ENCODE measurements at regions of chr10 and their contacts with region 1.

Region 1: GRCh38 chr10:70758757-70759514 is 26.2 kb downstream of the TBATA start:
- DNase-seq: peak; percentile 20 to 70 (median 54)
- ATAC-seq: peak; percentile 58
- H3K4me3 ChIP-seq: no peak overlapping the region
- H3K4me3 Mint-ChIP-seq: peak overlapping the region in 1 of 10 donors; percentile 38
- H3K27ac ChIP-seq: no peak overlapping the region
- H3K27ac Mint-ChIP-seq: peak overlapping the region in 1 of 9 donors; percentile 28
- H3K4me1 ChIP-seq: no peaks in the 10 kb centered on the region
- H3K4me1 Mint-ChIP-seq: peaks cover 0 to 10% (median 0%) of the 10 kb centered on the region in 7 donors
- H3K27me3 ChIP-seq: no peaks in the 10 kb centered on the region
- H3K27me3 Mint-ChIP-seq: peaks cover 0 to 2% (median 0%) of the 10 kb centered on the region in 5 donors

Region 2: DNA sequence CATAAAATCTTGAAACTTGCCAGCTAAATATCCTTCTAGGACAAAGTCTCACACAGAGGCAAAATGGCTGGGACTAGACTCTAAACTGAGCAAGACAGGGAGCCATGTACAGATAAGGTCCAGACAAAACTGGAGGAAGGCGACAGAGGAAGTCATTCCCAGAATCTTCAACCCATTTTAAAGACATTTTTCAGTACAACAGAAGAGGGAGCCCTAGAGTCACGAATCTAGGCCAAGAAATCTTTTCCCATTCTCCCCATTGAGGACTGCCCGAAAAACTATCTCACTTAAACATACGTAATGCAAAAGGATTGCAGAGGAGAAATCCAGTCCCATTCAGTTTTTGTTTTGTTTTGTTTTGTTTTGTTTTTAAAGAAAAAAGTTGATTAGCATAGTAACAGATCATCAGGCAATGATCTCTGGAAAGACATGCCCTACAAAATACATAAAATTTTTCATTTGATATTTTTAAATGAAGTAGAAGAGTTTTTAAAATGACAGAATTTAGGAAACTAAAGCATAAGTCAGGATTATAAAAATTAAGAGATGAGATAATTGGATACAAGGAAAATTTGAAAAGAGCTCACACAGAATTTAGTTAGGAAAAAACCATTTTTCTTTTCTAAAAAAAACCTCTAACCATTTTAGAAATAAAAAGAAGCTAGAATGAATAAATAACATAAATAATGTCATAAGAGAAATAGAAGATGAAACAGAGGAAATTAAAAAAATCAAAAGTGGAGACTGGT is 139.5 kb before region 1 on chr10:
- CTCF ChIA-PET with region 1: no interaction called
- POLR2A ChIA-PET with region 1: no interaction called
- intact Hi-C with region 1: loop called in 1 of 2 experiments (anchors 2 kb)
- DNase-seq: no peak
- ATAC-seq: no peak
- H3K4me3 ChIP-seq: no peak overlapping the region
- H3K4me3 Mint-ChIP-seq: no peak overlapping the region
- H3K27ac ChIP-seq: no peak overlapping the region
- H3K27ac Mint-ChIP-seq: no peak overlapping the region
- H3K4me1 ChIP-seq: peaks cover 0 to 45% of the 10 kb centered on the region in 2 donors
- H3K4me1 Mint-ChIP-seq: peaks cover 0 to 33% (median 5%) of the 10 kb centered on the region in 7 donors
- H3K27me3 ChIP-seq: no peaks in the 10 kb centered on the region
- H3K27me3 Mint-ChIP-seq: peaks cover 0 to 8% (median 0%) of the 10 kb centered on the region in 5 donors

Region 3: DNA sequence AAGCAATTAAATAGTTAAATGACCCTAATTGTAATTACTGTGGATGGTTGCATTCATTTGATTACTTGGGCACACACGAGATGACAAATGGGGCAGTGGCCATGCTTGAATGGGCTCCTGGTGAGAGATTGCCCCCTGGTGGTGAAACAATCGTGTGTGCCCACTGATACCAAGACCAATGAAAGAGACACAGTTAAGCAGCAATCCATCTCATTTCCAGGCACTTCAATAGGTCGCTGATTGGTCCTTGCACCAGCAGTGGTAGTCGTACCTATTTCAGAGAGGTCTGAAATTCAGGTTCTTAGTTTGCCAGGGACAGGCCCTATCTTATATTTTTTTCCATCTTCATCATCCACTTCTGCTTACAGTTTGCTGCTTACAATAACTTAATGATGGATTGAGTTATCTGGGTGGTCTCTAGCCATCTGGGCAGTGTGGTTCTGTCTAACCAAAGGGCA is 121.2 kb after region 1 on chr10:
- CTCF ChIA-PET with region 1: no interaction called
- POLR2A ChIA-PET with region 1: no interaction called
- intact Hi-C with region 1: loop called (anchors 1 to 2 kb)
- DNase-seq: peak; percentile 39 to 79 (median 65)
- ATAC-seq: peak; percentile 90
- H3K4me3 ChIP-seq: no peak overlapping the region
- H3K4me3 Mint-ChIP-seq: no peak overlapping the region
- H3K27ac ChIP-seq: no peak overlapping the region
- H3K27ac Mint-ChIP-seq: no peak overlapping the region
- H3K4me1 ChIP-seq: no peaks in the 10 kb centered on the region
- H3K4me1 Mint-ChIP-seq: peaks cover 0 to 8% (median 3%) of the 10 kb centered on the region in 7 donors
- H3K27me3 ChIP-seq: no peaks in the 10 kb centered on the region
- H3K27me3 Mint-ChIP-seq: no peaks in the 10 kb centered on the region